ENCODE measurements at regions of chr10 and their contacts with region 1.

Region 1: GRCh38 chr10:35336084-35336831 is at the start of gene CCNY:
- DNase-seq: peak in 1 of 2 donors; percentile 83
- H3K4me3 ChIP-seq: peak within 1 kb of the TSS; percentile 65 to 98
- H3K27ac ChIP-seq: peak within 1 kb of the TSS; percentile 70 to 80
- H3K4me1 ChIP-seq: peaks cover 3 to 35% of the 10 kb centered on the region in 2 donors
- H3K27me3 ChIP-seq: no peaks in the 10 kb centered on the region
- CTCF ChIP-seq: peak in 1 of 3 experiments; percentile 16
- total RNA-seq, gene CCNY: 37.5 TPM

Region 2: DNA sequence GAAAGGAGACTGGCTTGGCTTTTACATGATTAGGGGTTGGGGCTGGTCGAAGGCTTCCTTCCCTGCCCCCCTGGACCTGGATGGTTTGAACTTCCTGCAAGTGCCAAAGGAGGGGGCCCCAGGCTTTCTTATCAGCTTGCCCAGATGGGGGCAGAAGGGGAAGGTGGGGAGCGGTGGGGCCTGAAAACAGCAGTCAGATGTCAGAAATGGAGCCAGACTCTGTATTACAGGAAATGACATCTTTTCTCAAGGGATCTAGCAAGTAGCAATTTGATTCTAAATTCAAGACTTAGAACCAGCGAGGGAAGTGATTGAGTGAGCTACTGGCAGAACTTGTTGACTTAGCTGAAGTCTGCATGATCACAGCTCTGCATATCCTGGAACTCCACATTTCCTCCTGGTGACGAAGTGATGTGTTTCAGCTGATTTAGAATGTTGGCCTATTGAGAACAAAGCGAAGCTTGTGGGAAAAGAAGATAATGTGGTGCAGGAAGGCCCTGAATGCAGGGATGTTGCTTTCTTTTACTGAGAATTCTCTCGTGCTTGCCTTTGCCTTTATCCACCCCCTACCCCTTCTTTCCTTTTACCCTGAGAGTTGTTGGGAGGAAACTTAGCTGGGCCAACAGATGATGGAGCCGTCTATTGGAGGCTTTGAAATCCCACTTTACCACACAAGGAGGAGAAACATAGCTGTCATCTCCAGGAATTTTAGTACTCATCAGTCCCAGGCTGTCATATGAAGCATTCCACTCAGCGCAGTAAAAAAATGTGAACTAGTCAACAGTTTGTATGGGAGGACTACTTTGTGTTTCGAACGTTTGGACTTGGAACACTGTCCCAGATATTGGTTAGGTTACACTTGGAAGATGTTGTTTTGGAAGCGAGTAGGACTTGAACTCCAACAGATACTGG is 43.2 kb after region 1 on chr10:
- intact Hi-C with region 1: loop called (anchors 1 kb)
- DNase-seq: no peak
- H3K4me3 ChIP-seq: no peak overlapping the region
- H3K27ac ChIP-seq: peak overlapping the region; percentile 76 to 82
- H3K4me1 ChIP-seq: peaks cover 13 to 29% of the 10 kb centered on the region in 2 donors
- H3K27me3 ChIP-seq: no peaks in the 10 kb centered on the region
- CTCF ChIP-seq: no peak

Region 3: GRCh38 chr10:35416619-35417312 is 80.5 kb after region 1 on chr10:
- intact Hi-C with region 1: loop called (anchors 5 kb)
- DNase-seq: no peak
- H3K4me3 ChIP-seq: no peak overlapping the region
- H3K27ac ChIP-seq: peak overlapping the region in 1 of 2 donors; percentile 44
- H3K4me1 ChIP-seq: peaks cover 0 to 17% of the 10 kb centered on the region in 2 donors
- H3K27me3 ChIP-seq: no peaks in the 10 kb centered on the region
- CTCF ChIP-seq: no peak

Region 4: GRCh38 chr10:35563261-35563891 is 227.1 kb after region 1 on chr10:
- intact Hi-C with region 1: loop called (anchors 2 kb)
- DNase-seq: peak in 1 of 2 donors; percentile 71
- H3K4me3 ChIP-seq: no peak overlapping the region
- H3K27ac ChIP-seq: peak overlapping the region in 1 of 2 donors; percentile 3
- H3K4me1 ChIP-seq: peaks cover 0 to 22% of the 10 kb centered on the region in 2 donors
- H3K27me3 ChIP-seq: no peaks in the 10 kb centered on the region
- CTCF ChIP-seq: peak; percentile 77 to 99 (median 96)

Measured in ascending aorta (tissue), 2 donors.